HepG2 (cell line): ENCODE measurements at regions of chr17 and their contacts with region 1.

Region 1: DNA sequence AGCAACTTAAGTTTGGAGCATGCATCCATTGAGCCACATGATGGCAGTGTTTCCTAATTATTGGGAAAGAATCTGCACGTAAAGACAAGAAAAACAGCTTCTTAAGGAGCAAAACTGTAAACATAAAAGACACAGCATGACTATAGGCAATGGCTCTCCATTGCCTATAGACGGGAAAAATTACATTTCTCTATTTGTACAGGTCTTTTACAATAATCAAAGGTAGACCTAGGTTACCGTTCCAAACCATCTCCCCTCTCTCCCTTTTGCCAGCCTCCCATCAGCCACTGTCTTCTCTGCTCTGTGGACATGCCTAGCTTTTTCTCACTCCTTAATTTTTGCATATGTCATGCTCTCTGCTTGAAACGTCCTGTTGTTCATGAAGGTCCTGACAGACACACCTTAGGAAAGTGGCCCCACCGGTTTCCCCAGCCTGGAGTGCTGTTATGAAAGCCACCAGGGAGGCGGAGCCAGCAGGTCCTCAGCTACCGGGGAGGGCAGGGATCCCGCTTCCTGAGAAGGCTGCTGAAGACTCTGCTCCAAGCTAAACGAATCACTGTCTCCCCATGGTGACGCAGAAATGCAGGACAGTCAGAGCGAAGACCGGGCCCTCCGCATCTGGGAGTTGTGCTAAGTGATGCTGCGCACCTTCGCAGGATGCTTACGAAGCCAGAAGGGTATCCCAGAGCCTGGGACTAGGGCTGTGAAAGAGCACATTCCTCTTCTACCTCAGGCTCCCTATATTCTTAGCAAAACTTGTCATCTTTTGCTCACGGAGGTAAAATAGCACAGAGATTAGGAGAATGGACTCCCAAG is 2.2 kb upstream of the SLC16A11 start:
- DNase-seq: peak; percentile 80
- ATAC-seq: peak; percentile 72
- H3K4me3 ChIP-seq: peak overlapping the region; percentile 52 to 79 (median 61)
- H3K27ac ChIP-seq: peak overlapping the region; percentile 73
- H3K4me1 ChIP-seq: peaks cover 55% of the 10 kb centered on the region
- H3K27me3 ChIP-seq: no peaks in the 10 kb centered on the region; a peak in 1 of 5 replicates
- CTCF ChIP-seq: peak; percentile 84
- EP300 ChIP-seq: no peak
- POLR2A ChIP-seq: peak in 1 of 2 experiments; percentile 22; a peak in 1 of 4 replicates
- RAD21 ChIP-seq: peak; percentile 78

Region 2: GRCh38 chr17:7035591-7036368 is 10.3 kb before region 1 on chr17 and contains the start of gene SLC16A13:
- CTCF ChIA-PET with region 1: no interaction called
- POLR2A ChIA-PET with region 1: interaction called, 71 read pairs
- in situ Hi-C with region 1: no loop called
- intact Hi-C with region 1: no loop called
- DNase-seq: peak; percentile 97
- ATAC-seq: peak; percentile 81
- H3K4me3 ChIP-seq: peak within 1 kb of the TSS; percentile 75 to 97 (median 94)
- H3K27ac ChIP-seq: peak within 1 kb of the TSS; percentile 90
- H3K4me1 ChIP-seq: peaks cover 41% of the 10 kb centered on the region
- H3K27me3 ChIP-seq: no peaks in the 10 kb centered on the region; a peak in 2 of 5 replicates
- CTCF ChIP-seq: no peak; the same call in 1 of the 2 replicates
- EP300 ChIP-seq: no peak
- POLR2A ChIP-seq: peak; percentile 78 to 93
- RAD21 ChIP-seq: no peak
- total RNA-seq, gene SLC16A13: 1.9 and 3.0 TPM in 2 replicates

Region 3: DNA sequence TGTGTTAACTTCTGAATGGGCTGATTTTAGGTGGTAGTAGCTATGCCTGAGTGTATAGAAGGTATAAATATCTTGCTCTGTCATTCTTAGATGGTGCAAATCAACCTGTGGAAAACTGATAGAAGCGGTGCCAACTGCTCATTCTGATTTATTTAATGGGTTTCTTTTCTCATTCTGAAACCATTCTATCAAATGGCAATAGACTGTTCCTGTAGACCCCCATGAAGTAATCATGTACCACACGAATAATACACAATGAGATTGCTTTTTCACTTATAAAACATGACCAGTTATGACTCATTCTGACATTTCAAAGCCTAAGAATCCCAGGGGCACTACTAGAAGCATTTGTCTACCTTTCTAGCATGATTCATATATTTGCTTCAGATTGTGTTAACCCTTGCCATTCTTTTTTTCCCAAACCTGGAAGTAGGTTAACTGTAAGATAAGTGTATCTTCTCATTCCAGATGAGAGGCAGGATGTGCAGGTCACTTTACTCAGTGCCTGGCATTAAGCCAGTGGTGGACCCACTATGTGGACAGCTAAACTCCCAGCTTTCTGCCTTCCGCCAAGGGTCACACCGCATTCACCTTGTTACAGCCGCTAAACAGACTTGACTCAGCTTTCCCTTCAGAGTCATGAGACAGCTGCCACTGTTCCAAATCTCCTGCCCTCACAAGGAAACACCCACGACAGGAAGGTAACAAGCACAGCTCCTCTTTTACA is 14.2 kb after region 1 on chr17:
- CTCF ChIA-PET with region 1: no interaction called
- POLR2A ChIA-PET with region 1: no interaction called
- in situ Hi-C with region 1: no loop called
- intact Hi-C with region 1: no loop called
- DNase-seq: peak; percentile 59
- ATAC-seq: no peak
- H3K4me3 ChIP-seq: no peak overlapping the region
- H3K27ac ChIP-seq: no peak overlapping the region
- H3K4me1 ChIP-seq: peaks cover 9% of the 10 kb centered on the region
- H3K27me3 ChIP-seq: peaks cover 0 to 9% of the 10 kb centered on the region in 2 experiments; a peak in 1 of 5 replicates
- CTCF ChIP-seq: no peak
- EP300 ChIP-seq: no peak
- POLR2A ChIP-seq: no peak
- RAD21 ChIP-seq: no peak

Region 4: DNA sequence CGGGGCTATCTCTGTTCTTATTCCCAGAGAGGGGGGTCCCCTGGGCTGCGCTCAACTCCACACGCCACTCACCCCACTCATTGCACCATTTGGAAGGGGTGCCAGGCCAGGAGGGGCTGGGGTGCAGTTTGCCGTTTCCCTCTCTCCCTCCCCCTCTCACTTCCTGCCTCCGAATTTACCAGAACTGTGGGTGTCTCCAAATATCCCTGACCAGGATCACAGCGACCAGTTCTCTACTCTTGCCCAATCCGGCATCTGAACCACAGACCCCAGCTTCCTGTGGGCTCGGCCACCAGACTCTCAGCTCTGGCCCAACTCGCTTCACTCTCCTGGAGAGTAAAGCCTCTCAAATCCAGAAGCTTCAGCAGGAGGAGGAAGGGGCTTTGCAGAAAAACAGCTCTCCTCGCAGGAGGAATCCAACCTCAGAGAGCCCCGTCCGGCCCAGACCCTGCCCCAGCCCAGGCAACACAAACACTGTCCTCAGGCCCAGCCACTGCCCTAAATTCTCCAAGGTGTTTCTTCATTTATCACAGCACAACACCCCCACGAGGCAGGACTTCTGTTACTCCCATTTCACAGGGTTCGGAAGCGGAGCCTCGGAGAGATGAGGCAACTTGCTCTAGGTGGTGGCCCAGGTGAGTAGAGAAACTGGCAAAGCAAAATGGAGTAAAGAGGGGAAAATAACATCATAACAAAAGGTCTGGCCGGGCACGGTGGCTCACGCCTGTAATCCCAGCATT is 68.9 kb after region 1 on chr17:
- CTCF ChIA-PET with region 1: no interaction called
- POLR2A ChIA-PET with region 1: interaction called, 40 read pairs
- in situ Hi-C with region 1: no loop called
- intact Hi-C with region 1: loop called (anchors 5 kb)
- DNase-seq: peak; percentile 91
- ATAC-seq: peak; percentile 77
- H3K4me3 ChIP-seq: peak overlapping the region; percentile 86 to 99 (median 88)
- H3K27ac ChIP-seq: peak overlapping the region; percentile 98
- H3K4me1 ChIP-seq: peaks cover 87% of the 10 kb centered on the region
- H3K27me3 ChIP-seq: peaks cover 0 to 5% of the 10 kb centered on the region in 2 experiments; a peak in 1 of 5 replicates
- CTCF ChIP-seq: no peak
- EP300 ChIP-seq: no peak
- POLR2A ChIP-seq: peak; percentile 40 to 52; a peak in 3 of 4 replicates
- RAD21 ChIP-seq: 0 out of 2 replicates have a peak, but pooled peaks have one; percentile 3

Region 5: DNA sequence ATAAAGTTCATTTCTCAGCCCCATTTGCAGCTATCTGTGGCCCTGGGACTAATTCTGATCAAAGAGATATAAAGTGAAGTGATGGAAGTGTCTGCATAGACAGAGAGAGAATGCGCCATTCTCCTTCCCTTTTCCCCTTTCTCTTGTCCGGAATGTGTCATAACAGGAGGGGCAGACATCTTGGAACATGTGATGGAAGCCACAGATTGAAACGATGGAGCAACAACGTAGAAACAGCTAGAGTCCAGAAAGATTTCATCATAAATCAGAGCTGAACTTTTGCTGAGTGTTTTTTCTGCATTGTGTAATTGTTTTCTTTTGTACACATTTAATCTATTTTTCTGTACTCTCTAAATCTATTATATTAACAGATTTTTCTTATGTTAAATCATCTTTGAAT is 121.7 kb after region 1 on chr17:
- CTCF ChIA-PET with region 1: interaction called, 3 read pairs
- POLR2A ChIA-PET with region 1: interaction called, 12 read pairs
- in situ Hi-C with region 1: no loop called
- intact Hi-C with region 1: no loop called
- DNase-seq: peak; percentile 56
- ATAC-seq: peak; percentile 16; the same call in 1 of the 3 replicates
- H3K4me3 ChIP-seq: no peak overlapping the region
- H3K27ac ChIP-seq: peak overlapping the region; percentile 49
- H3K4me1 ChIP-seq: peaks cover 62% of the 10 kb centered on the region
- H3K27me3 ChIP-seq: no peaks in the 10 kb centered on the region
- CTCF ChIP-seq: no peak
- EP300 ChIP-seq: no peak
- POLR2A ChIP-seq: no peak
- RAD21 ChIP-seq: no peak

Region 6: DNA sequence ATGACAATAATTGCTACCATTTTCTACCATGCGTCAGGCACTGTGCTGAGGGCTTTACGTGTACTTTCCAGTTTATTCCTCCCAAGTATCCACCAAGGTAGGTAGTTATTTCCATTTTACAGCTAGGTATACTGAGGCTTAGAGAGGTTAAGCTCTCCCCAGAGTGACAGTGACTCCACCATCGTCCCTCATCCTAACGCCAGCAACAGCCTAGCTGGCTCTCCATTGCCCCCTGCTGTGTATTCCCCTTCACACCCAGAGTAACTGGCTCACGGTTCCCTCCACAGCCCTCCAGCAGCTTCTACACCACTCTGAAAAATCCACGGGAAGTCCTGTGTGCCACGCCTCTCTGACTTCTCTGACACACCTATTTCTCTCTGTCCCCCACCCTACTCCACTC is 140.1 kb after region 1 on chr17:
- CTCF ChIA-PET with region 1: no interaction called
- POLR2A ChIA-PET with region 1: interaction called, 12 read pairs
- in situ Hi-C with region 1: no loop called
- intact Hi-C with region 1: no loop called
- DNase-seq: peak; percentile 61
- ATAC-seq: peak; percentile 58
- H3K4me3 ChIP-seq: no peak overlapping the region
- H3K27ac ChIP-seq: no peak overlapping the region
- H3K4me1 ChIP-seq: peaks cover 63% of the 10 kb centered on the region
- H3K27me3 ChIP-seq: no peaks in the 10 kb centered on the region
- CTCF ChIP-seq: peak; percentile 78
- EP300 ChIP-seq: no peak
- POLR2A ChIP-seq: no peak
- RAD21 ChIP-seq: peak; percentile 73; the same call in 1 of the 2 replicates

Region 7: DNA sequence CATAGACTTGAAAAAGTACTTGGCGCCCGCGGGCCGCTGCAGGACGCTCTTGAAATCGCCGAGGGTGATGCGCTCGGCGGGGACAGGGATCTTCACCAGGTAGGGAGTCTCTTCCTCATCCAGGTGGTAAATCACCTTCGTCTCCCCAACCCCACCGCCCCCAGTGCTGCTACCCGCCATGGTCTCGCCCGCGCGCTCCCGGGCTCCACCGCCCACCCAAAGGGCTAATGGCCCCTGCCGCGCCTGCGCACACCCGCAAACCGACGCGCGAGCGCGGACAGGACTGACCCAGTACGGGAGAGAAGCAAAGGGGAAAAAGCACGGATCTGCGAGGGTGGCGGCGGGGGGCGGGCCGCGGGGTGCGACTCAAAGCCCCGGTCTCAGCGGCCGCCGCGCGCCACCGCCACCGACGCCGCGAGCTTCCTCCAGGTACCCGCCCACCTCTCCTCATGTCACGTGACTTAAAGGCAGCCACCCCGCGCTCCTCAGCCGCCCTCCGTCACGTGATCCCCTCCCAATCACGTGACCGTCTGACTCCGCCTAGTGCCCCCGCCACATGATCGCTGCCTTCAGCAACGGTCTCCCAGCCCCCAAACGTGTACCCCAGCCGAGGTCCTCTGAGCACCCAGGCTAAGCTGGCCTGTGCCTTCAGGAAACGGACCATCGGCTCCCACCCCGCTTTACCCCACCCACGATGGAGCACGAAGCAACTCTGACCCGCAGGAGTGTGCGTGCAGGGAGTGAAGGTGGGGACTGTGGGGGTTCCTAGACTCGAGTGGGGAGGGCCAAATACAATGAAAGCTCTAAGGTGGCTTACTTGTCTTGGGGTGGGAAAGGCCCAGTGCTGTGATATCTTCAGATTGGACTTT is 188.2 kb after region 1 on chr17 and contains the start of gene DVL2:
- CTCF ChIA-PET with region 1: no interaction called
- POLR2A ChIA-PET with region 1: interaction called, 13 read pairs
- in situ Hi-C with region 1: no loop called
- intact Hi-C with region 1: no loop called
- DNase-seq: peak; percentile 88
- ATAC-seq: peak; percentile 62
- H3K4me3 ChIP-seq: peak within 1 kb of the TSS; percentile 66 to 93 (median 89)
- H3K27ac ChIP-seq: peak within 1 kb of the TSS; percentile 79
- H3K4me1 ChIP-seq: peaks cover 53% of the 10 kb centered on the region
- H3K27me3 ChIP-seq: no peaks in the 10 kb centered on the region; a peak in 1 of 5 replicates
- CTCF ChIP-seq: no peak; the same call in 1 of the 2 replicates
- EP300 ChIP-seq: peak in 1 of 2 experiments; percentile 56; a peak in 2 of 4 replicates
- POLR2A ChIP-seq: peak; percentile 45 to 93; a peak in 3 of 4 replicates
- RAD21 ChIP-seq: peak; percentile 75
- total RNA-seq, gene DVL2: 27.2 and 38.2 TPM in 2 replicates

Region 8: GRCh38 chr17:7351665-7352501 is 305.8 kb after region 1 on chr17 and contains the start of gene KCTD11:
- CTCF ChIA-PET with region 1: no interaction called
- POLR2A ChIA-PET with region 1: no interaction called
- in situ Hi-C with region 1: no loop called
- intact Hi-C with region 1: loop called (anchors 5 kb)
- DNase-seq: peak; percentile 73
- ATAC-seq: peak; percentile 76
- H3K4me3 ChIP-seq: peak within 1 kb of the TSS; percentile 64 to 88 (median 87)
- H3K27ac ChIP-seq: peak within 1 kb of the TSS; percentile 95
- H3K4me1 ChIP-seq: peaks cover 55% of the 10 kb centered on the region
- H3K27me3 ChIP-seq: peaks cover 0 to 5% of the 10 kb centered on the region in 2 experiments; a peak in 2 of 5 replicates
- CTCF ChIP-seq: peak; percentile 66
- EP300 ChIP-seq: no peak
- POLR2A ChIP-seq: peak in 1 of 2 experiments; percentile 84; a peak in 3 of 4 replicates
- RAD21 ChIP-seq: peak; percentile 58; the same call in 1 of the 2 replicates
- total RNA-seq, gene KCTD11: 1.3 and 1.6 TPM in 2 replicates